Posterior cingulate gyrus (tissue), 11 donors: ENCODE measurements at regions of chr1 and their contacts with region 1.

Region 1: DNA sequence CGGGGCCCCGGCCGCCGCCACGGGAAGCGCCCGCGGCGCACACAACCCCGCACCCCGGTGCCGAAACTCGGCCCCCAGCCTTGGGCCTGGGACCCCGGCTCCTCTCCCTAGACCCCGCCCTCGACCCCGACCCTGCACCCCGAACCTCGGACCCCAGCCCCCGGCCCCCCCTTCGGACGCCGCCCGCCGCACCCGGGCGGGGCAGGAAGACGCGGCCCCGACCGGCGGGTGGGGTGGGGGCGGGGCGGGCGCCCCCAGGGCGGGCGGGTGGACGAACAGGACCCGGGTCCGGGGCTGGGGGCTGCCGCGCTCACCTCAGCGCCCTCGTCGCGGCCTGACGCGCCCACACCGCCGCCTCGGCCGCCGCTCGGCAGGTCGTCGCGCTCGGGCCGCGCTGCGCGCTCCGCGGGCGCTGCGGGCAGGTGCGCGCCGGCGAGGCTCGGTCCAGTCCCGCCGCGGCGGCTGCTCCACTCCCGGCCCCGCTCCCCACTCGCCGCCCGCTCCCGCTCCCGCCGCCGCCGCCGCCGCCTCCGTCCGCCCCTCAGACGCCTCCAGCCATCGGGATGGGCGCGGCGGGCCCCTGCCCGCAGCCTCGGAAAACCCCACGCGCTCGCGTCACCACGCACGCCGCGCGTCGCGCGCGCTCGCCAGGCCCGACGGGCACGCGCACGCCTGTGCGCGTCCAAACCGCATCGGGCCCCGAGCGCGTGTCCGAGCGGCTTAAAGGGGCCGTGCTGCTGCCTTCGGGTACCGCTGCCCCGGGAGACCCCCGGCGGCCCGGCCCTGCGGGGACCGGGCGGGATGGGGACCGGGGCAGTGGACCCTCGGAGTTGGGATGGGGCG is at the start of gene GNB1:
- DNase-seq: peak; percentile 74 to 98 (median 83)

Region 2: DNA sequence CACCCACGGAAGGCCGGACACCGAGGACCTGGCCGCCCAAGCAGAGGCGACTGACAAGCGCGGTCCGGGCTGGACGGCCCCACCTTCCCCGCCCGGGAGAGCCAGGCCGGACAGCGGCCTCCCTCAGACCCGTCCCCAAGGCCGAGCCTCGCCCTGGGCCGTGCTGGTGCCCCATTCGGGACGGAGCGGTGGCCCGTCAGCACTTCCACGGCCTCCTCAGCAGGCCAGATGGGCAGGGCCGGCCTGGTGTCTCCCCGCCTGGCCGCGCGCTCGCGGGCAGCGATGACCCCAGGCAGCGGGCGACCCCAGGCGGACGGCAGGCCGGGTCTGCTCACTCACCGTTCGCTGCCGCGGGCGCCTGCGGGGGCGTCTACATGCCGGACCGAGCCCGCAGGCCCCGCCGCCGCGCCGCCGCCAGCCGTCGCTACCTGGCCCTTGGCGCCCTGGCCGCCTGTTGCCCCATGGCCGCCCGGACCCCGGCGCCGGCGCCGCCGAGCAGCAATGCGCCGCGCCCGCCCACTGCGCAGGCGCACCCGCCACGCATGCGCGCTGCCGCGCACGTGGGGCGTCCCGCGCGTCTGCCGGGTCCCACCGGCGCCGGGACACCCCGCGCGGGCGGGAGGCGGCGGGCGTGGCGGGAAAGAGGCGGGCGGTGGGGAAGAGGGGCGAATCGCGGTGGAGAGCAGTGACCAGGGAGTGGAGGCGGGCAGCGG is 112.6 kb before region 1 on chr1 and contains the start of gene NADK:
- intact Hi-C with region 1: loop called (anchors 2 kb)
- DNase-seq: peak in 7 of 10 donors; percentile 43 to 93 (median 72)

Region 3: DNA sequence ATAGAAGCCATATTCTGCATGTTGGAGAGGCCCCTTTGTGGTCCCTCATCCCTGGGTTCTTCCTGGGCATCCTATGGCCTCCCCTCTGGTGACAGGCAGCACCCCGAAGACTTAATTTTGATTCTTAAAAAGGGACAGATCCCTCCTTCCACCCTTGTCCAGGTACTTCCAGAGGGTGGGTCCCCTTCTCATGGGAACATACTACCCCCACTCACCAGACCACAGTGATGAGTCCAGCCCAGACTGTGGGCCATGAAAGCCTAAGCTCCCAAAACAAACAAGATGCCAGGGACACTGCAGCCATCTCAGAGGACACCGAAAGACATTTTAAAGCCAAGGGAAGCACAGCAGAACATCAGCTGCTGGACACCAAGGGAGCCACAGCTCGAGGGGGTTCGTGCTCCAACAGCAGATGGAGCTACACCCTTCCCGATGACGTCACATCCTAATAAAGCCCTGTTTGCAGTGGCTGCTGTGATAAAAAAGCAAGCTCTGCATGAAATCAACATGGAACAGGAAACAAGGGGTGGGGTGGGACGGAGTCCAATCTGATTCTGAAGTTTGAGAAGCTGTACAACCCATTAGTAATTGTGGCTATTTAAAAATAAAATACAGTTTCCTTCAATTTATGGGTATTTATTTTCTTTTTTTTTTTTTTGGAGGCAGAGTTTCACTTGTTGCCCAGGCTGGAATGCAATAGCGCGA is 32.2 kb before region 1 on chr1:
- intact Hi-C with region 1: loop called (anchors 5 kb)
- DNase-seq: peak in 7 of 10 donors; percentile 27 to 83 (median 38)